ENCODE measurements at regions of chr12 and their contacts with region 1.

Region 1: DNA sequence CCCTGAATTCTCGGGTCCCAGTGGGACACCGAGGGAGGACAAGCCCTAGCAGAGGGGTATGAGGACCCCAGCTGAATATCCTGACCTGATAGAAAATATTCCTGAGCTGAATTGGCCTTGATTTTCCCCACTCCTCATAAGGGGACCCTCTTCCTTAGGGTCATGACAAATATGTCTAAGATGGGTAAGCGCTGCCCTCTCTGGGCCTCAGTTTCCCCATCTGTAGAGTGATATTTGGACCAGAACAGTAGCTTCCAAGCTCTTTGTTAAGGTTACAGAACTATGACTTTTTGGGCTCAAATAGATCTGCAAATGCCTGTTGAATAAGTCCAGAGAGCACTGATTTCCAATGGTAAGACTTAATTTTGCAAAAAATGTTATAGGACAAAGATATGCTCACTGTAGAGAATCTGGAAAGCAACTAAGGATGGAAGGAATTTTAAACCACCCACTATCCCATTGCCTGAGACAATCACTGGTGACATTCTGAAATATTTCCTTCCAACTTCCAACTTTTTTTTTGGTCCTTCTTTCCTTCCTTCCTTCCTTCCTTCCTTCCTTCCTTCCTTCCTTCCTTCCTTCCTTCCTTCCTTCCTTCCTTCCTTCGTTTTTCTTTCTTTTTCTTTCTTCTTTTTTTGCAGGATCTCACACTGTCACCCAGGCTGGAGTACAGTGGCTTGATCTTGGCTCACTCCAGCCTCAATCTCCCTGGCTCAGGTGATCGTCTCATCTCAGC is 32.0 kb downstream of the MYL2 start:
- DNase-seq: no peak
- ATAC-seq: no peak
- H3K4me3 ChIP-seq: no peak overlapping the region
- H3K4me3 Mint-ChIP-seq: peak overlapping the region; percentile 51 to 97 (median 92)
- H3K27ac ChIP-seq: no peak overlapping the region
- H3K27ac Mint-ChIP-seq: peak overlapping the region in 5 of 9 donors; percentile 69 to 91 (median 77)
- H3K4me1 ChIP-seq: peaks cover 0 to 4% of the 10 kb centered on the region in 2 donors
- H3K4me1 Mint-ChIP-seq: peaks cover 0 to 8% (median 4%) of the 10 kb centered on the region in 7 donors
- H3K27me3 ChIP-seq: no peaks in the 10 kb centered on the region
- H3K27me3 Mint-ChIP-seq: peaks cover 0 to 12% (median 0%) of the 10 kb centered on the region in 5 donors

Region 2: GRCh38 chr12:110501752-110502738 is 386.4 kb before region 1 on chr12 and contains the starts of genes RAD9B and VPS29:
- CTCF ChIA-PET with region 1: no interaction called
- POLR2A ChIA-PET with region 1: no interaction called
- intact Hi-C with region 1: loop called in 1 of 2 experiments (anchors 5 kb)
- DNase-seq: peak; percentile 91 to 100 (median 99)
- ATAC-seq: peak; percentile 98
- H3K4me3 ChIP-seq: peak within 1 kb of the TSS; percentile 86
- H3K4me3 Mint-ChIP-seq: peak within 1 kb of the TSS; percentile 88 to 100 (median 97)
- H3K27ac ChIP-seq: peak within 1 kb of the TSS; percentile 89
- H3K27ac Mint-ChIP-seq: peak within 1 kb of the TSS; percentile 93 to 100 (median 97)
- H3K4me1 ChIP-seq: peaks cover 20 to 22% of the 10 kb centered on the region in 2 donors
- H3K4me1 Mint-ChIP-seq: peaks cover 22 to 52% (median 39%) of the 10 kb centered on the region in 7 donors
- H3K27me3 ChIP-seq: no peaks in the 10 kb centered on the region
- H3K27me3 Mint-ChIP-seq: peaks cover 0 to 3% (median 0%) of the 10 kb centered on the region in 5 donors
- total RNA-seq, gene RAD9B: 0.60 to 2.9 (median 1.1) TPM
- total RNA-seq, gene VPS29: 78.5 to 131 (median 115) TPM

Region 3: GRCh38 chr12:110508071-110508586 is 380.3 kb before region 1 on chr12:
- CTCF ChIA-PET with region 1: no interaction called
- POLR2A ChIA-PET with region 1: no interaction called
- intact Hi-C with region 1: loop called (anchors 1 to 5 kb)
- DNase-seq: no peak
- ATAC-seq: no peak
- H3K4me3 ChIP-seq: no peak overlapping the region
- H3K4me3 Mint-ChIP-seq: no peak overlapping the region
- H3K27ac ChIP-seq: no peak overlapping the region
- H3K27ac Mint-ChIP-seq: no peak overlapping the region
- H3K4me1 ChIP-seq: no peaks in the 10 kb centered on the region
- H3K4me1 Mint-ChIP-seq: peaks cover 0 to 3% (median 0%) of the 10 kb centered on the region in 7 donors
- H3K27me3 ChIP-seq: no peaks in the 10 kb centered on the region
- H3K27me3 Mint-ChIP-seq: peaks cover 0 to 5% (median 0%) of the 10 kb centered on the region in 5 donors

Region 4: DNA sequence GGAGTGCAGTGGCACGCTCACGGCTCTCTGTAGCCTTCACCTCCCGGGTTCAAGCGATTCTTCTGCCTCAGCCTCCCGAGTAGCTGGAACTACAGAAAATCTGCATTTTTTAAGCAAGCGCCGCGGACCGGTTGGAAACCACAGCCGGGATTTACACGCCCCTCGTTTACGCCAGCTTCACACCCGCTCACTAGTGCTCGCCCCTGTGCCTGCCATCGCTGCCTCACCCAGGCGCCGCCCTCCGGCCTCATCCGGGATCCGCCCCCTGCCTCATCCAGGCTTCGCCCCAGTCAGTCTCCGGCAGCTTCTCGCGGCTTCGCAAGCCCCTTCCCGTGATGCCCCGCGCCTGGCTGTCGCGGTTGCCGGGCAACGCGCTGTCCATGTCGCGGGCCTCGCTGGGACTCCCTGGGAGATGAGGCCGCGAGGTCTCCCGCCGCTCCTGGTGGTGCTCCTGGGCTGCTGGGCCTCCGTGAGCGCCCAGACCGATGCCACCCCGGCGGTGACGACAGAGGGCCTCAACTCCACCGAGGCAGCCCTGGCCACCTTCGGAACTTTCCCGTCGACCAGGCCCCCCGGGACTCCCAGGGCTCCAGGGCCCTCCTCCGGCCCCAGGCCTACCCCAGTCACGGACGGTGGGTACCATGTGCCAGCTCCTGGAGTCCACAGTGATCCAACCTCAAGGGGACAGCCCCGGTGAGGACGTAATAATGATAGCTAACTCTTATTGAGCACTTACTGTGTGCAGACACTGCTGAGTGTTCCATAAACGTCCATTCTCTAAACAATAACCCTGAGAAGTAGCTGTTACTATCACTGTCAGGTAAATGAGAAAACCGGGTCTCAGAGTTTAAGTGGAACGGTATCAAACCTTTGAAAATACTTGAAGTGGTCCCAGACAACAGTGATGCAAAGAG is 274.4 kb before region 1 on chr12 and contains the start of gene TCTN1:
- CTCF ChIA-PET with region 1: no interaction called
- POLR2A ChIA-PET with region 1: interaction called, 3 read pairs
- intact Hi-C with region 1: loop called in 1 of 2 experiments (anchors 5 kb)
- DNase-seq: peak; percentile 88 to 98 (median 93)
- ATAC-seq: peak; percentile 100
- H3K4me3 ChIP-seq: peak within 1 kb of the TSS; percentile 75
- H3K4me3 Mint-ChIP-seq: peak within 1 kb of the TSS; percentile 81 to 89 (median 88)
- H3K27ac ChIP-seq: peak within 1 kb of the TSS; percentile 87
- H3K27ac Mint-ChIP-seq: peak within 1 kb of the TSS; percentile 31 to 92 (median 87)
- H3K4me1 ChIP-seq: peaks cover 4 to 6% of the 10 kb centered on the region in 2 donors
- H3K4me1 Mint-ChIP-seq: peaks cover 0 to 10% (median 4%) of the 10 kb centered on the region in 7 donors
- H3K27me3 ChIP-seq: no peaks in the 10 kb centered on the region
- H3K27me3 Mint-ChIP-seq: no peaks in the 10 kb centered on the region
- total RNA-seq, gene TCTN1: 5.2 to 13.0 (median 10.2) TPM

Region 5: DNA sequence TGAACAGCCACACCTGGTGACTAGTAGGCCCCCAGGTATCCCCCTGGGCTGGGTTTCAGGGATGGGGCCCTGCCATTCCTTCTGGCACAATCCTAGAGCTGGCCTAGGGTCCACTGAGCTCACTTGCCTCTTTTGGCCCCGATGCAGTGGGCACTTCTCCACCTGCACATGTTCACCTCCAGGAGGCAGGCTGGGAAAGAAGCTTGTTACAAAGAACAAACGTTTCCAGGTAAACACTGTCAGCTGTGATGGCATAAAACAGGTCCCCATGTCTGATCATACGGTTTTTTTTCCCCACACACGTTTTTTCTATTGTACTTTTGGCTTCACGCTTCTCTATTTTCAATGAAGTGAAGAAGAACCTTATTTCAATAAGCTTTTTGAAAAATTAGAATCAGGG is 183.7 kb before region 1 on chr12:
- CTCF ChIA-PET with region 1: no interaction called
- POLR2A ChIA-PET with region 1: no interaction called
- intact Hi-C with region 1: loop called (anchors 1 to 10 kb)
- DNase-seq: peak in 2 of 9 donors; percentile 23 to 25
- ATAC-seq: no peak
- H3K4me3 ChIP-seq: no peak overlapping the region
- H3K4me3 Mint-ChIP-seq: no peak overlapping the region
- H3K27ac ChIP-seq: no peak overlapping the region
- H3K27ac Mint-ChIP-seq: peak overlapping the region in 4 of 9 donors; percentile 0 to 63 (median 50)
- H3K4me1 ChIP-seq: no peaks in the 10 kb centered on the region
- H3K4me1 Mint-ChIP-seq: peaks cover 0 to 4% (median 0%) of the 10 kb centered on the region in 7 donors
- H3K27me3 ChIP-seq: no peaks in the 10 kb centered on the region
- H3K27me3 Mint-ChIP-seq: no peaks in the 10 kb centered on the region

Region 6: DNA sequence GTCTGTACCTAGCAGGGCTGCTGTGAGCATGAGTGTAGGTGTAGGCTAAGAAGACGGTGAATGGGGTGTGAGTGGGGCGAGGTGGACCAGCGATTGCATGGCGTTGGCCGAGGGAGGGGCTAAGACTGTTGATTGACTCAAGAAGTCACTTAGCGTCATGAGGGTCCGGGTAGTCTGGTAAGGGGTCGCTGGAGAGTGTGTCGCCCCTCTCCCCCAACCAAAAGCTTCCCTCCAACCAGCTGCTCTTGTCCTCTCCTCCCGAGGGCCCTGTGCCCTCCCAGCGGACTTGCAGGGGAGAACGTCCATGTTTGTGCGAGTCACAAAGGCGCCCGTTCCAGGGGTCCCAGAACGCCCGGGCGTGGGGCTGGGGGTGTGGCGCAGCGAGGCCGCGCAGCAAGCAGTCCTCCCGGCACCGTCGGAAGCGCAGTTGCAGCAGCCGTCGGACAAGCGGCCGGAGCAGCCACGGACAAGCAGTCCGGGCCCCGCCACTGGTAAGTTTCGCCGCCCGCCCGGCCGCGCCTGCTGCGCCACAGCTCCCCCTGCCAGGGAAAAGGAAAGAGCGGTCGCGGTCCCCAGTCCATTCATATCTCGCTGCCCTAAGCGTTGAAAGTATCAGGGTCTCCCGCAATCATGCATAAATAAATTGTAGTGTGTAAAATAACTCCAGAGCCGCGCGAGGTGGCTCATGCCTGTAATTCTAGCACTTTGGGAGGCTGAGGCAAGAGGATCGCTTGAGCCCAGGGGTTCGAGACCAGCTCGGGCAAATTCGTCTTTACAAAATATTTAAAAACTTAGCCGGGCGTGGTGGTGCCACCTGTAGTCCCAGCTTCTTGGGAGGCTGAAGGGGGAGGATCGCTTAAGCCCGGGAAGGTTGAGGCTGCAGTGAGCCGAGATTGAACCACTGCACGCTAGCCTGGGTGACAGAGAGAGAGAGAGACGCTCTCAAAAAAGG is 41.5 kb before region 1 on chr12 and contains the start of gene CCDC63:
- CTCF ChIA-PET with region 1: interaction called, 3 read pairs
- POLR2A ChIA-PET with region 1: no interaction called
- intact Hi-C with region 1: loop called in 1 of 2 experiments (anchors 1 kb)
- DNase-seq: peak in 7 of 9 donors; percentile 9 to 44 (median 19)
- ATAC-seq: peak; percentile 68
- H3K4me3 ChIP-seq: peak within 1 kb of the TSS; percentile 35
- H3K4me3 Mint-ChIP-seq: peak within 1 kb of the TSS; percentile 80 to 90 (median 84)
- H3K27ac ChIP-seq: no peak within 1 kb of the TSS
- H3K27ac Mint-ChIP-seq: peak within 1 kb of the TSS in 3 of 9 donors; percentile 53 to 84 (median 61)
- H3K4me1 ChIP-seq: no peaks in the 10 kb centered on the region
- H3K4me1 Mint-ChIP-seq: peaks cover 0 to 10% (median 4%) of the 10 kb centered on the region in 7 donors
- H3K27me3 ChIP-seq: peaks cover 0 to 3% of the 10 kb centered on the region in 2 donors
- H3K27me3 Mint-ChIP-seq: peaks cover 16 to 67% (median 28%) of the 10 kb centered on the region in 5 donors
- total RNA-seq, gene CCDC63: not detected

Region 7: DNA sequence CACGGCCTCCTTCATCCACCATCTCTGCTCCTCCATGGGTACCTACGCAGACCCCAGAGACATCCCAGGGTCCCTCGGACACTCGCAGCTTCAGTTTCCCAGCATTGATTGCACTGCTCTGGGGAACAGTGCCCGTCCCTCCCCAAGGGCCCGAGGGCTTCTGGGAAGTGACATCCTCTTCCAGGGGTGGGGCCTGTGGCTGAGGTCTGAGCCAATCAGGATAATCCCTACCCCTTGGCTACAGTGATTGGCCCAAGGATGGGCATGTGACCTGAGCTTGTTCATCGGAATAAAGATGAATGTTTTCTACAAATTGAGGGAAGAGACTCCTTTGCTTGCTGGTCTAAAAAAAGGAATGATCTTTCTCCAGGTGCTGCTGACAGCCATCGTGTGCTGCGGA is 69.2 kb after region 1 on chr12:
- CTCF ChIA-PET with region 1: no interaction called
- POLR2A ChIA-PET with region 1: no interaction called
- intact Hi-C with region 1: no loop called
- DNase-seq: no peak
- ATAC-seq: no peak
- H3K4me3 ChIP-seq: no peak overlapping the region
- H3K4me3 Mint-ChIP-seq: no peak overlapping the region
- H3K27ac ChIP-seq: no peak overlapping the region
- H3K27ac Mint-ChIP-seq: no peak overlapping the region
- H3K4me1 ChIP-seq: no peaks in the 10 kb centered on the region
- H3K4me1 Mint-ChIP-seq: no peaks in the 10 kb centered on the region
- H3K27me3 ChIP-seq: no peaks in the 10 kb centered on the region
- H3K27me3 Mint-ChIP-seq: peaks cover 8 to 31% (median 12%) of the 10 kb centered on the region in 5 donors

Region 8: GRCh38 chr12:111211910-111212757 is 323.7 kb after region 1 on chr12:
- CTCF ChIA-PET with region 1: no interaction called
- POLR2A ChIA-PET with region 1: no interaction called
- intact Hi-C with region 1: no loop called
- DNase-seq: peak in 2 of 9 donors; percentile 4 to 6
- ATAC-seq: no peak
- H3K4me3 ChIP-seq: no peak overlapping the region
- H3K4me3 Mint-ChIP-seq: no peak overlapping the region
- H3K27ac ChIP-seq: no peak overlapping the region
- H3K27ac Mint-ChIP-seq: no peak overlapping the region
- H3K4me1 ChIP-seq: no peaks in the 10 kb centered on the region
- H3K4me1 Mint-ChIP-seq: no peaks in the 10 kb centered on the region
- H3K27me3 ChIP-seq: peaks cover 0 to 2% of the 10 kb centered on the region in 2 donors
- H3K27me3 Mint-ChIP-seq: peaks cover 0 to 17% (median 10%) of the 10 kb centered on the region in 5 donors